ENCODE measurements at regions of chr11 and their contacts with region 1.

Region 1: GRCh38 chr11:118488480-118489109 is 38.7 kb upstream of the TTC36 start:
- H3K4me3 ChIP-seq: no peak overlapping the region
- H3K27ac ChIP-seq: no peak overlapping the region
- H3K4me1 ChIP-seq: no peaks in the 10 kb centered on the region
- CTCF ChIP-seq: no peak

Region 2: DNA sequence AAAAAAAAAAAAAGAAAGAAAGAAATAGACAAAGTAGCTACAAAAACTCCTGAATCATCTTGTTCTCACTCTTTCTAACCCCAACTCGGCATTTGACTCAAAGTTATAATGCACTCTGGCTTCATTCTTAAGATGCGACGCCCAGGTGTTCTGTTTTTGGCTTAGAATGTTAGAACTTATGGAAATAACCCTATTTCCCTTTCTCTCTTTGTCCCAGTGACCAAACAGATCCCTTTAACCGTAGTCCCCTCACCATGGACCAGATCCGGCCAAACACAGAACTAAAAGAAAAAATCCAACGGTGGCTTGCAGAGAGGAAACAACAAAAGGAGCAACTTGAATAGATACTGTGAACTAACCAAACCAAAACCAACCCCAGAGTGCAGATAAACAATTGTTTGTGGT is 92.5 kb before region 1 on chr11:
- CTCF ChIA-PET with region 1: interaction called, 12 read pairs
- POLR2A ChIA-PET with region 1: no interaction called
- H3K4me3 ChIP-seq: no peak overlapping the region
- H3K27ac ChIP-seq: no peak overlapping the region
- H3K4me1 ChIP-seq: no peaks in the 10 kb centered on the region
- CTCF ChIP-seq: no peak

Region 3: DNA sequence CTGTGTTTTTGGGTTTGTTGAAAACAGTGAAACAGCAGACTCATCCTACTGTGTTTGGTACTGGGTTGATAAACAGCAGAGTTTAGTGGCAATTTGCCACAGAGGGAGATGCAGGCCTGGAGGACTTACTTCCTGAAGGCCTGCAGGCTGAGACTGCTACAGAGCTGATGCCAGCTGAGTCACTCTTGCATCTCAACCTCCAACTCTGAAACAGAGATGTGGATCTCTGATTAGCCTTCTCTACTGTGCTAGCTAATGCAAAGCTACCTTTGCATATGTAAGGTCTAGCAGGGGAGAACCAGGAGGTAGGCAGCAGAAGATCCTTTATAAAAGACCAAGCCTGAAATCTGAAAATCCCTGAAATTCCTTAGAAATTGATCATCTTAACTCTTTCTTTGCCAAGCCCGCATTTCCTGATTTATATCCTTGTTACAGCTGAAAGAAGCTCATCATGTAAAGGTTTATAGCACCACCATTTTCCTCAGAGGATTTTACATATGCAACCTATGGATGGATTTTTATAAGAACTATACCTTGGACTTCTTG is 72.8 kb before region 1 on chr11:
- CTCF ChIA-PET with region 1: no interaction called
- POLR2A ChIA-PET with region 1: no interaction called
- H3K4me3 ChIP-seq: no peak overlapping the region
- H3K27ac ChIP-seq: no peak overlapping the region
- H3K4me1 ChIP-seq: no peaks in the 10 kb centered on the region
- CTCF ChIP-seq: no peak

Measured in HEK293 (cell line).